ENCODE measurements at regions of chr7 and their contacts with region 1.

Region 1: GRCh38 chr7:102260856-102261255 is 25.8 kb upstream of the SH2B2 start:
- DNase-seq: no peak
- H3K4me3 ChIP-seq: no peak overlapping the region
- H3K27ac ChIP-seq: no peak overlapping the region
- H3K4me1 ChIP-seq: no peaks in the 10 kb centered on the region
- H3K27me3 ChIP-seq: no peaks in the 10 kb centered on the region
- CTCF ChIP-seq: no peak

Region 2: GRCh38 chr7:102425639-102426267 is 164.9 kb after region 1 on chr7:
- CTCF ChIA-PET with region 1: no interaction called
- POLR2A ChIA-PET with region 1: no interaction called
- intact Hi-C with region 1: no loop called
- DNase-seq: no peak
- H3K4me3 ChIP-seq: no peak overlapping the region
- H3K27ac ChIP-seq: no peak overlapping the region
- H3K4me1 ChIP-seq: peaks cover 11% of the 10 kb centered on the region
- H3K27me3 ChIP-seq: no peaks in the 10 kb centered on the region
- CTCF ChIP-seq: no peak

Region 3: DNA sequence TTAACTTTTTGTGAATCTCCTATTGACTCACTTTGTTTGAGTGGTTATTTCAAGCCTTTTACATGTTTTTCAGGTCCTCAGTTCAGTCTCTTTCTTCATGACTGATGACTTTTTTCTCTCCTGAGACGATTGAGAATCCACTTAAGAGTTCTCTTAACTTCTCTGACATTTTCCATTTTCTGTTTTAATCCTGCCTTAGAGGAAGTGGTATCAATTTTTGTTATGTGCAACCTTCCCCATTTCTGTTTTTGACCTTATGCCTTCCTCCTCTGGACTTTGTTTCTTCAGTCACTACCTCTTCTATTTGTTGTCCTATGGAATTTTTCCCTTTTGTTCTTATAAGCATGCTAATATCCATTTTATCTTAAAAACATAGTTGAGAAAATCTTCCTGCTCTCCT is 1088.9 kb after region 1 on chr7:
- CTCF ChIA-PET with region 1: interaction called, 10 read pairs
- POLR2A ChIA-PET with region 1: no interaction called
- intact Hi-C with region 1: no loop called
- DNase-seq: no peak
- H3K4me3 ChIP-seq: no peak overlapping the region; the same call in 1 of the 2 replicates
- H3K27ac ChIP-seq: no peak overlapping the region
- H3K4me1 ChIP-seq: peaks cover 32% of the 10 kb centered on the region
- H3K27me3 ChIP-seq: no peaks in the 10 kb centered on the region
- CTCF ChIP-seq: no peak